ENCODE measurements at regions of chr3 and their contacts with region 1.

Region 1: DNA sequence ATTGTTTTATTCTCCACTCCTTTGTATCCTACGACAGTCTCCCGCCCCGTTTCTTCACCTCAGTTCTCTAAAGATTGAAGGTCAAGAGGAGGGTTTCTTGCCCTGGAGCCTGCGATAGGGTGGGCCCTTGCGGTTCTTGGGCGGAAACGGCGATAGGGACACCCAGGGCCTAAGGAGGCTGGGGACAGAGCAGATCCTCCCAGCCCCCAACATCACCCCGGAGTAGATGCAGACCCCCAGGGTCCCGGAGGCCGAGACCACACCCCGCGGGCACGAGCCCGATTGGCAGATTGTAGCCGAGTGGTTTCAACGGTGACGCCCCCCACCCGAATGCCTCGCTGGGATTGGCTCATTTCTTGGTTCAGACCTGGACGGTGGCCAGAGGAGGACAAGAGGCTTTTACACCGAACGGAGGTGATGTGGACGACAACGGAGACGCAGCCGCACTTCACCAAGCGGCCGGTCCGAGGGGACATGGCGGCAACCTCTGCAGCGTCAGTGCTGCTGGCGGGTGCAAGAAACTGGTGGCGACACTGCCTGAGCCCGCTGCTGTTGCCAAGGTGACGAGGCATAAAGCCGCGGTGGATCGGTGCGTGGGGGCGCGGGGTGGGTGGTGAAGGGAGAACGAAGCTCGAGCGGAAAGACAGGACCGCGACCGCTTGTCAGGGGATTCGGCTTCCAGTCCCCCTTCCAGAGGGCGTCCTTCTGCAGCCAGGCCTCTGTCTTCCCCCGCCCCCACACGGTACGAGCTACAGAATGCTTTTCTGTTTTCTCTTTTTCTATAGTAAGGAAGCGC is 19.0 kb upstream of the MCF2L2 start:
- DNase-seq: peak; percentile 82 to 91
- H3K4me3 ChIP-seq: peak overlapping the region; percentile 88
- H3K27ac ChIP-seq: no peak overlapping the region
- H3K4me1 ChIP-seq: peaks cover 20% of the 10 kb centered on the region
- H3K27me3 ChIP-seq: no peaks in the 10 kb centered on the region
- CTCF ChIP-seq: no peak

Region 2: GRCh38 chr3:182078316-182078715 is 1369.1 kb before region 1 on chr3:
- CTCF ChIA-PET with region 1: no interaction called
- POLR2A ChIA-PET with region 1: no interaction called
- intact Hi-C with region 1: no loop called
- DNase-seq: no peak
- H3K4me3 ChIP-seq: no peak overlapping the region
- H3K27ac ChIP-seq: no peak overlapping the region
- H3K4me1 ChIP-seq: no peaks in the 10 kb centered on the region
- H3K27me3 ChIP-seq: no peaks in the 10 kb centered on the region
- CTCF ChIP-seq: no peak

Region 3: GRCh38 chr3:182294256-182294655 is 1153.1 kb before region 1 on chr3:
- CTCF ChIA-PET with region 1: no interaction called
- POLR2A ChIA-PET with region 1: no interaction called
- intact Hi-C with region 1: no loop called
- DNase-seq: peak in 1 of 2 experiments; percentile 35
- H3K4me3 ChIP-seq: no peak overlapping the region
- H3K27ac ChIP-seq: no peak overlapping the region
- H3K4me1 ChIP-seq: no peaks in the 10 kb centered on the region
- H3K27me3 ChIP-seq: no peaks in the 10 kb centered on the region
- CTCF ChIP-seq: no peak

Region 4: GRCh38 chr3:183265834-183266417 is 181.5 kb before region 1 on chr3:
- CTCF ChIA-PET with region 1: no interaction called
- POLR2A ChIA-PET with region 1: no interaction called
- intact Hi-C with region 1: no loop called
- DNase-seq: peak; percentile 73 to 99
- H3K4me3 ChIP-seq: no peak overlapping the region; the same call in 1 of the 2 replicates
- H3K27ac ChIP-seq: peak overlapping the region; percentile 85
- H3K4me1 ChIP-seq: peaks cover 65% of the 10 kb centered on the region
- H3K27me3 ChIP-seq: no peaks in the 10 kb centered on the region
- CTCF ChIP-seq: no peak

Region 5: DNA sequence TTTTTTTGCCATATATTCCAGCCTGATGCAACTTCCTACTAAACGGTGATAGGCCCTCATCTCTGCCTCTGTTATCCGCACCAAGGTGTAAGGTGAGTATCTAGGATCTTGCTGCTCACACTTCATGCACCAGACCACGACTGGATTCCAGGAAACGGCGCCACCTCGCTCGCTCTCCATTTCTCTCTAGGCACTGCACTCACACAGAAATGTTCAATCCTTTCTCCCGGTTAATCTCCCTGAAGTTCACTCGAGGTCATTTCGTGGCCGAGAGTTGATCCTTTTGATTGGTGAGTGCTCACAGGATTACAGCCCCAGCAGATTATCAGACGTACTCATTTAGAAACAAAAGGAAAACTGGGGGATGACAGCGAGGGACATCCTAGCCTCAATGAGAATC is 47.1 kb before region 1 on chr3:
- CTCF ChIA-PET with region 1: no interaction called
- POLR2A ChIA-PET with region 1: no interaction called
- intact Hi-C with region 1: loop called (anchors 2 kb)
- DNase-seq: no peak
- H3K4me3 ChIP-seq: no peak overlapping the region
- H3K27ac ChIP-seq: no peak overlapping the region
- H3K4me1 ChIP-seq: no peaks in the 10 kb centered on the region
- H3K27me3 ChIP-seq: no peaks in the 10 kb centered on the region
- CTCF ChIP-seq: no peak